Endothelial cell of umbilical vein (primary cell): ENCODE measurements at regions of chr16 and their contacts with region 1.

Region 1: GRCh38 chr16:67260426-67261075 is 11.8 kb downstream of the SLC9A5 start:
- DNase-seq: peak; percentile 24
- H3K4me3 ChIP-seq: no peak overlapping the region
- H3K27ac ChIP-seq: no peak overlapping the region
- H3K4me1 ChIP-seq: peaks cover 4% of the 10 kb centered on the region
- H3K27me3 ChIP-seq: no peaks in the 10 kb centered on the region
- CTCF ChIP-seq: peak; percentile 44 to 51
- POLR2A ChIP-seq: no peak

Region 2: DNA sequence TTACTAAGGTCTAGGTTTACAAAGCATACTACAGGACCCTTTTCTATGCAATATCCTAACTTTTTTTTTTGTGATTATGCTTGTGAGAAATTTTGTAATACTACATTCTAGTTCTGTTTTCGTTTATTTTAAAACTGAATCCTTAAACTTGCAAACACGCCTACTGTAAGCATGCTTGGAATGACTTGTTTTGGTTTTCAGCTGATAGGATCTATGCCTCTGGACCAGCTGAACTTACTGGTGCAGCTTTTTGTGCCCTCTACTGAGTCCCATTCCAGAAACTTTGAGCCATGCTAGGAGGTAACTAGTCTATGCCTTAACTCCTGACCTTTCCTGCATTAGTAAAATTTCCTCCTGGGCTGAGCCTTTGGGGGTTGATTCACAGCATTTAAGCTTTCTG is 374.2 kb before region 1 on chr16:
- CTCF ChIA-PET with region 1: no interaction called
- POLR2A ChIA-PET with region 1: no interaction called
- dilution Hi-C with region 1: no loop called
- intact Hi-C with region 1: no loop called
- DNase-seq: no peak
- H3K4me3 ChIP-seq: no peak overlapping the region
- H3K27ac ChIP-seq: no peak overlapping the region
- H3K4me1 ChIP-seq: no peaks in the 10 kb centered on the region
- H3K27me3 ChIP-seq: no peaks in the 10 kb centered on the region
- CTCF ChIP-seq: no peak
- POLR2A ChIP-seq: no peak

Region 3: GRCh38 chr16:66991545-66992077 is 268.9 kb before region 1 on chr16:
- CTCF ChIA-PET with region 1: no interaction called
- POLR2A ChIA-PET with region 1: no interaction called
- dilution Hi-C with region 1: no loop called
- intact Hi-C with region 1: no loop called
- DNase-seq: no peak
- H3K4me3 ChIP-seq: no peak overlapping the region
- H3K27ac ChIP-seq: no peak overlapping the region
- H3K4me1 ChIP-seq: no peaks in the 10 kb centered on the region
- H3K27me3 ChIP-seq: no peaks in the 10 kb centered on the region
- CTCF ChIP-seq: no peak
- POLR2A ChIP-seq: no peak

Region 4: DNA sequence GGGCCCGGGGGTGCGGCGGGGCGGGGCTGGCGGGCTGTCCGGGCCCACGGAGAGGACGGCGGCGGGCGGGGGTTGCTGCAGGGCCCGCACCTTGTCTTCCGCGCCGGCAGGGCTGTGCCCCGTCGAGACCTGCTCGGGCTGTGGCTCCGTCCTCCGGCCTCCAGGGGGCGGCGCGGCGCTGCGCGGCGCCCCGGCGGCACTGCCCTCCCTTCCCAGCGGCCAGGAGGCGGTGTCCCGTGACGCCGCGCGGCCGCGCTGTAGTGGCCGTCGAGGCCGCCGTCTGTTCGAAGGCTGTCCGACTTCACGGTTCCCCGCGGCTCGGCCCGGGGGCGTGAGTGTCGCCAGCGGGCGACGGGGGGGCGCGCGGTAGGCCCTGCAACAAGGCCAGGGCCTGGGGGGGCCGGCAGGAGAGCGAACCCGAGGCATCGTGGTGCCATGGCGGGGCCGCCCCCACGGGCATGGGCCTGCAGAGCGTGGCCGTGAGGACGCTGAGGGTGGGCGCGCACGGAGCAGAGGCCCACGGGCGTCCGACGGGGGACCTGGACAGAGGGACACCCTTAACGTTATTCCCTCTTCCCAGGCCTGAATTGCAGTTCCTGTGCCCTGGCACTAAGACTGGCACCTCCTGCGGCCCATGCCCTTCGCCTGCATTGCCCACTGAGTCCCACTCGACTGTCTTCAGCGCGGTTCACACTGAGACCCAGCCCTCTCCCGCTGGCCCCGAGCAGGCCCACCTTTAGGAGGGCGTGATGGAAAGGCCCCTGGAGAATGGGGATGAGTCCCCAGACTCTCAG is 18.9 kb after region 1 on chr16 and contains the start of gene PLEKHG4:
- CTCF ChIA-PET with region 1: interaction called, 55 read pairs
- POLR2A ChIA-PET with region 1: interaction called, 3 read pairs
- dilution Hi-C with region 1: no loop called
- intact Hi-C with region 1: no loop called
- DNase-seq: peak; percentile 71
- H3K4me3 ChIP-seq: peak within 1 kb of the TSS; percentile 16 to 60 (median 51)
- H3K27ac ChIP-seq: peak within 1 kb of the TSS; percentile 78
- H3K4me1 ChIP-seq: peaks cover 21% of the 10 kb centered on the region
- H3K27me3 ChIP-seq: no peaks in the 10 kb centered on the region
- CTCF ChIP-seq: peak; percentile 73
- POLR2A ChIP-seq: no peak
- total RNA-seq, gene PLEKHG4: 23.9 and 26.6 TPM in 2 replicates

Region 5: DNA sequence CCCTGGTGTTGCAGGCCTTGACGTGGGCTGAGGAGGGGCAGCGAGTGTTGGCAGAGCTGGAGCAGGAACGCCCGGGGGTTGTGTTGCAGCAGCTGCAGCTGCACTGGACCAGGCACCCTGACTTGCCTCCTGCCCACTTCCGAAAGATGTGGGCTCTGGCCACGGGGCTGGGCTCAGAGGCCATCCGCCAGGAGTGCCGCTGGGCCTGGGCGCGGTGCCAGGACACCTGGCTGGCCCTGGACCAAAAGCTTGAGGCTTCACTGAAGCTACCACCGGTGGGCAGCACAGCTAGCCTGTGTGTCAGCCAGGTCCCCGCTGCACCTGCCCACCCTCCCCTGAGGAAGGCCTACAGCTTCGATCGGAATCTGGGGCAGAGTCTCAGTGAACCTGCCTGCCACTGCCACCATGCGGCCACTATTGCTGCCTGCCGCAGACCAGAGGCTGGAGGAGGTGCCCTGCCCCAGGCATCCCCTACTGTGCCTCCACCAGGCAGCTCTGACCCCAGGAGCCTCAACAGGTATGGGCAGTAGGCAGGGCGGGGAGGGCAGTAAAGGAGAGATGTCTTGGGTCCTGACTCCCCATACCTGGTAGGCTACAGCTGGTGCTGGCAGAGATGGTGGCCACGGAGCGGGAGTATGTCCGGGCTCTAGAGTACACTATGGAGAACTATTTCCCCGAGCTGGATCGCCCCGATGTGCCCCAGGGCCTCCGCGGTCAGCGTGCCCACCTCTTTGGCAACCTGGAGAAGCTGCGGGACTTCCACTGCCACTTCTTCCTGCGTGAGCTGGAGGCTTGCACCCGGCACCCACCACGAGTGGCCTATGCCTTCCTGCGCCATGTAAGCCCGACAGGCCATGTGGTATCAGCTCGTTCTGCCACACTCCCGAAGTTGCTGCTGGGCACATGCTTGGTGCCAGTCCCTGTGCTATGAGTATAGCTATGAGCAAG is 24.4 kb after region 1 on chr16:
- CTCF ChIA-PET with region 1: interaction called, 55 read pairs
- POLR2A ChIA-PET with region 1: no interaction called
- dilution Hi-C with region 1: no loop called
- intact Hi-C with region 1: no loop called
- DNase-seq: peak; percentile 13
- H3K4me3 ChIP-seq: no peak overlapping the region
- H3K27ac ChIP-seq: no peak overlapping the region
- H3K4me1 ChIP-seq: no peaks in the 10 kb centered on the region
- H3K27me3 ChIP-seq: no peaks in the 10 kb centered on the region
- CTCF ChIP-seq: peak; percentile 29 to 65
- POLR2A ChIP-seq: no peak

Region 6: GRCh38 chr16:67326472-67327309 is 66.1 kb after region 1 on chr16 and contains the starts of genes KCTD19 and LRRC36:
- CTCF ChIA-PET with region 1: interaction called, 11 read pairs
- POLR2A ChIA-PET with region 1: no interaction called
- dilution Hi-C with region 1: no loop called
- intact Hi-C with region 1: no loop called
- DNase-seq: peak; percentile 71
- H3K4me3 ChIP-seq: peak within 1 kb of the TSS; percentile 54 to 87 (median 83)
- H3K27ac ChIP-seq: peak within 1 kb of the TSS; percentile 61
- H3K4me1 ChIP-seq: peaks cover 17% of the 10 kb centered on the region
- H3K27me3 ChIP-seq: peaks cover 10 to 15% of the 10 kb centered on the region in 2 experiments
- CTCF ChIP-seq: peak; percentile 68 to 76
- POLR2A ChIP-seq: no peak
- total RNA-seq, gene KCTD19: 0.16 and 0.44 TPM in 2 replicates
- total RNA-seq, gene LRRC36: 2.0 and 2.4 TPM in 2 replicates

Region 7: GRCh38 chr16:67339453-67339852 is 78.9 kb after region 1 on chr16:
- CTCF ChIA-PET with region 1: interaction called, 60 read pairs
- POLR2A ChIA-PET with region 1: no interaction called
- dilution Hi-C with region 1: no loop called
- intact Hi-C with region 1: loop called (anchors 1 kb)
- DNase-seq: peak; percentile 40
- H3K4me3 ChIP-seq: no peak overlapping the region
- H3K27ac ChIP-seq: no peak overlapping the region
- H3K4me1 ChIP-seq: no peaks in the 10 kb centered on the region
- H3K27me3 ChIP-seq: no peaks in the 10 kb centered on the region
- CTCF ChIP-seq: no peak
- POLR2A ChIP-seq: no peak

Region 8: GRCh38 chr16:67464565-67464964 is 204.0 kb after region 1 on chr16:
- CTCF ChIA-PET with region 1: interaction called, 13 read pairs
- POLR2A ChIA-PET with region 1: no interaction called
- dilution Hi-C with region 1: no loop called
- intact Hi-C with region 1: no loop called
- DNase-seq: no peak
- H3K4me3 ChIP-seq: no peak overlapping the region
- H3K27ac ChIP-seq: no peak overlapping the region
- H3K4me1 ChIP-seq: peaks cover 9% of the 10 kb centered on the region
- H3K27me3 ChIP-seq: no peaks in the 10 kb centered on the region
- CTCF ChIP-seq: no peak
- POLR2A ChIP-seq: no peak